Activated T-helper 1 cell treated with anti-CD3 and anti-CD28 coated beads, Interleukin-12 subunit alpha, Interleukin-12 subunit beta, Interleukin-2, Interleukin-4 antibody, amounts not matched to agents 30 ng/mL and 10 ng/mL and 1 ng/mL, durations not matched to agents 14 hours and 24 hours and 36 hours (primary cell): ENCODE measurements at regions of chr17 and their contacts with region 1.

Region 1: DNA sequence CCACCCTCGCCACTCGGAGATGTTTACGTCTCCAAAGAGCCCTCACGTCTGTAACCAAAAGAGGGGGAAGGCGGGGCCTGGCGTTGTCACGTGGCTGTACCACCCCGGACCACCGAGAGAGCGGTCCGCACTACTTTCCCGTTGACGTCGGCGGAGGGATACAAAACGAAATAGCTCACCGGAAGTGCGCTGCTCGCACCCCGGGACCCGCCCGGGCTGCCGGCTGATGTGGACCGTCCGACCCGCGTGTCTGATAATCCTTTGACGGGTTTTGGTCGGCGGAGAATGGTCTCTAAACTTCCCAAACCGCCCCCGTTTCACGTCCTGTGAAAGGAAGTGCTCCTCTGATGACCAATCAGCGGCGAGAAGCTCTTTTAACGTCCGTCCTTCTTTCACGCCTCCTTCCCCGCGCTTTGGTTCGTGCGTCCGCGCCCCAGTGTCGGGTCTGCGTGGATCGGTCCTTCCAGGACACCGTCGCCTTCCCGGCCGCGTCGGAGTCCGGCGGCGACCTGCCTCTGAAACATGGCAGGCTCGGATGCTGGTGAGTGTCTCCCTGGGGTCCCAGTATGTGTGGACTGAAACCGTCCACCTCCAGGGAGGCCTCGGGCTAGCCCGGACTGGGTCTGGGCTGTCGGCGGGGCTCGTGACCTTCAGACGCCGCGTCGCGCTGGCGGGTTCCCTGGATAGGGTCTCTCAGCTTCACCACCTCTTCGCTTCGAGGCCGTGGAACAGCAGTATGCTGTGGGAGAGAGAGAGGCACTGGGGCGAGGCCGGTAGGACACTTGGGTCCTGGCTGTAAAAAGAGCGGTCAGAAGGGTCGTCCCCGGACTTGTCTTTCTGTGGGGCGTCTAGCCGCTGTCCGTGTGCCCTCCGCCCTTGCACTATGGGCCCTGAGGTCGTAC is at the start of gene CEP95:
- DNase-seq: peak; percentile 93
- H3K4me3 Mint-ChIP-seq: peak within 1 kb of the TSS; percentile 97
- H3K27ac Mint-ChIP-seq: peak within 1 kb of the TSS; percentile 99
- H3K4me1 Mint-ChIP-seq: peaks cover 48% of the 10 kb centered on the region
- H3K27me3 Mint-ChIP-seq: no peaks in the 10 kb centered on the region
- total RNA-seq, gene CEP95: 42.4 and 46.4 TPM in 2 replicates

Region 2: GRCh38 chr17:63773381-63774140 is 733.3 kb before region 1 on chr17 and contains the start of gene CCDC47:
- intact Hi-C with region 1: loop called (anchors 2 kb)
- DNase-seq: peak; percentile 99
- H3K4me3 Mint-ChIP-seq: peak within 1 kb of the TSS; percentile 96
- H3K27ac Mint-ChIP-seq: peak within 1 kb of the TSS; percentile 100
- H3K4me1 Mint-ChIP-seq: peaks cover 63% of the 10 kb centered on the region
- H3K27me3 Mint-ChIP-seq: no peaks in the 10 kb centered on the region
- total RNA-seq, gene CCDC47: 74.8 and 79.2 TPM in 2 replicates

Region 3: DNA sequence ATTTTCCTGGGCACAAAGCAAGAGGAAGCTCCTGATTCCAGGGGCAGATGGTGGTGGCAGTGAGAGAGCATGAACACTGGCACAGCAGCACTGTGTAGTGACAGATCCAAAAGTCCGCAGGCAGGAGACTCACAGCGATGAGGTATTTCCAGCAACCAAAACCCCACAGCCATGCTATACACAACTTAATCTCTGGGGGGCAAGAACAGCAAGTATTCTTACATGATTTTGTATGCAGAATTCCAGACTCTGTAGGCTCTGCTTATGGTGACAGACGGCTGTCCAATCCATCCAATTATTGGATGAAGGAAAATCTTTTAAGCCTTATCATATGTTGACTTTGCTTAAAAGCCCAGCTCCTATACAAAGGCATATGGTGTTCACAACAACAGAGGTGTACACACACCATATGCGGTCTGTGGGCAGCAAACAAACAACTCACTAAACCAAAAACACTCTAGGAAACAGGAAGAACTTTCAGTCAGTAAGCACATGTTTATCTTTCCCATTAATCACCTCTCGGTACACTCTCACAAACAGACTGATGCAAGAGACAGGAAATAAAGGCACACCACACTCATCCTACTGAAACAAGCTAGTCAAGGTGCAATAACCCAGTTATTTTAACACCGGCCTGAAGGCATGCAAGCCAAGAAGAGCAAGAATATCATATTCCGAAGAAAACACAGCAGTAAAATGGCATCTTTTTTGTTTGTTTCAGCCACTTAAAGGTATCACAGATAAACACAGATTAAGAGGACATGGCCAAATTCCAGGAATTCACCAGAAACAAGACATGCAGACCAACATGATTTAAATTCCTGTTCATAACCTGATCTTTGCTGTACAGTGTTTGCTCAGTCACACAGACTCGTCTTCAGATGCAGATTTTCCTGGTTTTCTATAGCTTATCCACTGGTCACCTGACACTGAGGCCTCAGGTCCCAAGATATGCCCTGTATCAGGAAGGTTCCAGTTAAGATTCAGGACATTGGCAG is 424.7 kb before region 1 on chr17:
- intact Hi-C with region 1: loop called (anchors 1 kb)
- DNase-seq: peak; percentile 53
- H3K4me3 Mint-ChIP-seq: peak overlapping the region; percentile 60
- H3K27ac Mint-ChIP-seq: no peak overlapping the region
- H3K4me1 Mint-ChIP-seq: peaks cover 8% of the 10 kb centered on the region
- H3K27me3 Mint-ChIP-seq: no peaks in the 10 kb centered on the region

Region 4: DNA sequence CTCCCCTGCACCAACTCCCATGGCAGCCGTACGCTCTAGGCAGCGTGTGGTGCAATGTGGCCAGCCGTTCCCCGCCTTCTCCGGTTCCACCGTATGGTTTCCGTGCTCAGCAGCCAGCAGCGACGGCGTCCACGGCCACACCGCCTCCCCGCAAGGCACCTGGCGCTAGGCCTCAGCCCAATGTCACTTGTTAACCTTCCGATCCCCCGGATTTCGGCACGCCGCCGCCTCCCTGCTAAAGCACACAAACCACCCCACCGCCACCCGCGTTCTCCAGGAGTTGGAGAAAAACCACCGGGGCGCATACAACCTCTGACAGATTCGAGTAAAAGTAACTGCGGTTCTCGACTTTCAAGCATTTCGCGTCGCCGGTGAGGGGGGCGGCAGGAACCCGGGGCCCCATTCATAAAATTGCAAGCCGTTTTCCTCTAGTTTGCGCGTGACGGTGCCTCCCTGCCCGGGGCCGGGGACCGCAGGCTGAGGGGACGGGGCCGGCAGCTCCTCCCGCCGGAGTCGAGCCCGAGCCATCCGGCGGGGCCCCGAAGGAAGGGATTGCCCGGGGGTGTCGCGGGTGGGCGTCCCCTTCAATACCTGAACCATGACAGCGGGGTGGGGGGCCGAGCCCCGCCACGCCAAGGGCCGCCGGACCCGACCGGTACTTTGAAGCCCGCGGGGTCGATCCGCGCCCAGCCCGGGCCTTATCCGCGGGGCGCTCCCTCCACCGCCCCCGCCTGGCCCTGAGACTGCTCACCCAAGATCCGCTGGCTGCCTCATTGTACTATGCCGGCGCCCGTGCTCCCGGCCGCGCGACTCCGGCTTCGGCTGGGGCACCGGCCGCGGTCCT is 244.2 kb before region 1 on chr17 and contains the start of gene TEX2:
- intact Hi-C with region 1: loop called (anchors 2 kb)
- DNase-seq: peak; percentile 57
- H3K4me3 Mint-ChIP-seq: peak within 1 kb of the TSS; percentile 94
- H3K27ac Mint-ChIP-seq: peak within 1 kb of the TSS; percentile 98
- H3K4me1 Mint-ChIP-seq: peaks cover 37% of the 10 kb centered on the region
- H3K27me3 Mint-ChIP-seq: peaks cover 21% of the 10 kb centered on the region
- total RNA-seq, gene TEX2: 20.6 and 21.9 TPM in 2 replicates

Region 5: DNA sequence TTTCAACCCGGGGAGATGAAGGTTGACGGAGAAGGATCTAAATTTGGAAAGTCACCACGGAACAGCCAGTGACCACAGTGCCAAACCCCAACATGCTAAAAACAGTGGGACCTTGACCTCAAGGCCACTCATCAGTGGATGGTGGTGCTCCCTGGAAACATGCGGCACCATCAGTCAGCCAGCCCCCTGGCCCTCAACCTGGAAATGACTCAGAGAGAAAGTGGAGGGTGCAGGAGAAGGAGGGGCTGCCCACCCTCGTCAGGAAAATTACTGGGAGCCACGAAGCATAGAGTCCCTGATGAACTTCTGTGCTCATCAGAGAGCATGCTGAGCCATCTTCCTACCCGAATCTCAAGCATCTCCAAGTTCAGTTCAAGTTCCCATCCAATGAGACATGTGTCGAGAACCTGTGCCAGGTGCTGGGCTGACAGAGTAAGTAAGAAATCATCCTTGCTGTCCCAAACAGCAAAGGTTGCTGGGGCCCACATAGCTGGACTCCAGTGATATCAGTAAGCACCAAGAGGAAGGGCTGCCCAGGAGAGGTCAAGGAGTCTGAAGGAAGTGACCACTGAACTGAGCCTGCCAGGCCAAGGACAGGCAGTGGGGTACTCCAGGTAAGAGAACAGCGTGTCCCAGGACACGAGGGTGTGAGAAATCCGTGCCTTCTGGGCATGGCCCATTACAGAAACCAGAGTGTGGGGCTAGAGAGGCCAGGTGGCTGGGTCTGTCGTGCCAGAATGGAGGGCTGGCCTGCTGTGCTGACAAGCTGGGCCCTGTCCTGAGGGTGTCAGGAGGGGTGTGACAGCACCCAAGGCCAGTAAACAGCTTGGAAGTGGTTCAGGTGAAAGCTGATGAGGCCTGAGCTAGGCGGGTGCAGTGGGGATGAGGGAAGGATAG is 121.4 kb before region 1 on chr17:
- intact Hi-C with region 1: no loop called
- DNase-seq: peak; percentile 12
- H3K4me3 Mint-ChIP-seq: peak overlapping the region; percentile 55
- H3K27ac Mint-ChIP-seq: peak overlapping the region; percentile 26
- H3K4me1 Mint-ChIP-seq: peaks cover 25% of the 10 kb centered on the region
- H3K27me3 Mint-ChIP-seq: peaks cover 8% of the 10 kb centered on the region

Region 6: DNA sequence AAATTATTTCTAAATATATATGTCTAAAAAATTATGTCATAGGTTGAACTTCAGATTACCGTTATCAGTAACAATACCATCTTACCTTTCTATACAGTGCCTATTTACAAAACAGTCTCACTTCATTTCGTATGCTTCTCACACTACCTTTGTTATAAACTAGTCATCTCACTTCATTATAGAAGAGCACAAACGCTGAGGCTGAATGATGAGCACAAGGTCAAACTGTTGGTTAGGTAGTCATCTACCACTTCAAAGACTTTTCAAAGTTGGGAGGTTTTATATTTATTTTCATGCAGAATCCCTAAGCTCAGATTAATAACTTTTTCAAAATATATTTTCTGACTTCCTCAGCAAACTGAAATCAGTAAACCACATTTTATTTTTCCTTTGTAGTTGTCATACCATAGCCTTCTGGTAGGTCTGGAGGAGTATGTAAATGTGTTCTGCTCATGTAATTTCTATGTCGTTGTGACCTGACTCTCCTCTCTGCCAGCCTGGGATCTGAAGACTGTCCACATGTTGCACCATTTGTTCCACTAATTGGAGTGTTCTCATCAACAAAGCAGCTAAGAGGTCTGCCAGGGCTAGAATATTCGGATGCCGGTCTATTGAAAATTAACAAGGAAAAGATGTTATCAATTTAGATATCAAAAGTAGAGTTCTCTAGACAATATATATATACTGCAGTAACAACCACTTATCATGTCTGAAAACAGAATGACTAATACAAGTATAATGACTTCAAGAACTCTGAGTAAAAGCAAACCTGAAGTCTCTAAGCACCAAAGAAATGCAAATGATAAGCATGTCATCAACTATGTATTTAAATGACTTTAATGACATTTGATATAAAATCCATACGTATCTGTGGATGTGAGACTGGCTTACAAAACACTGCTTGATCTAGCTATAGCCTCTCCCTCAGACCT is 73.8 kb after region 1 on chr17:
- intact Hi-C with region 1: loop called (anchors 1 kb)
- DNase-seq: no peak
- H3K4me3 Mint-ChIP-seq: no peak overlapping the region
- H3K27ac Mint-ChIP-seq: peak overlapping the region; percentile 94
- H3K4me1 Mint-ChIP-seq: peaks cover 13% of the 10 kb centered on the region
- H3K27me3 Mint-ChIP-seq: no peaks in the 10 kb centered on the region

Region 7: GRCh38 chr17:64653325-64653984 is 146.6 kb after region 1 on chr17:
- intact Hi-C with region 1: loop called (anchors 1 kb)
- DNase-seq: no peak
- H3K4me3 Mint-ChIP-seq: no peak overlapping the region
- H3K27ac Mint-ChIP-seq: no peak overlapping the region
- H3K4me1 Mint-ChIP-seq: peaks cover 32% of the 10 kb centered on the region
- H3K27me3 Mint-ChIP-seq: no peaks in the 10 kb centered on the region

Region 8: DNA sequence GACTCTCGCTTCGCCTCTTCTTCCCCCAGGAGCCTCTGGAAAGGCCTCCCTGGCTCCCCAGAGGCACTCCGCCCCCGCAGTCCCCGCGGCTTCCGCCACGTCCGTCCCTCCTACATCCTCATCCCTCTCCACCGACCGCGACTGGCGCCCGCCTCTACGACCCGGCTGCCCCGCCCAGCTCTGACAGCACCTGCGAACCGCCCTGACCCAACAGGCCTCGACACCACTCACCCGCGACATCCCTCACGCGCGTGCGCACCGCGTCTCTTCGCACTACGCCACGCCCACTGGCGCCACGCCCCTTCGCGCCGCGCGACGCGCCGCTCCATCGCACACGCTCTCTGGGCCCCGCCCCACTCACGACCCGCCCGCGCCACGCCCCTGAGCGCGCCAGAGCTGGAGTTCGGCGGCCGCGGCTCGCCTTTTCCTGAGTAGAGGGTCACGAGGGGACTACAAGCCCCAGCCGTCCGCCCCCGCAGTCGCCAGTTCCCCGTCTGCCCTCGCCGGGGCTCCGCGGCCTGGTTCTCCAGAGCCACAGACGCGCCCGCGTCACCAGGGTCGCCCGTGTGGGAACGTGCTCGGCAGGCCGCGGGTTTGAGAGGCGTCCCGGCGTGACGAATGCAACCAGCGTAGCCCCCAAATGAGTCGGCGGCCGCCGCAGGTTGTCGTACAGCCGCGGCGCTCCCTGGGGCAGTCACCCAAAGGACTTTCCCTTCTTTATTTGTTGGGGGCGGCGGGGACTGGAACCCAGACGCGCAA is 468.7 kb after region 1 on chr17:
- intact Hi-C with region 1: loop called (anchors 1 kb)
- DNase-seq: peak; percentile 98
- H3K4me3 Mint-ChIP-seq: peak overlapping the region; percentile 74
- H3K27ac Mint-ChIP-seq: peak overlapping the region; percentile 99
- H3K4me1 Mint-ChIP-seq: peaks cover 60% of the 10 kb centered on the region
- H3K27me3 Mint-ChIP-seq: no peaks in the 10 kb centered on the region